ENCODE measurements at regions of chr5 and their contacts with region 1.

Region 1: GRCh38 chr5:150363185-150363584 is 5.7 kb downstream of the TCOF1 start:
- DNase-seq: no peak
- ATAC-seq: no peak
- H3K4me3 Mint-ChIP-seq: no peak overlapping the region
- H3K27ac Mint-ChIP-seq: no peak overlapping the region
- H3K4me1 Mint-ChIP-seq: peaks cover 40% of the 10 kb centered on the region
- H3K27me3 Mint-ChIP-seq: no peaks in the 10 kb centered on the region

Region 2: GRCh38 chr5:150377964-150378694 is 14.9 kb after region 1 on chr5:
- CTCF ChIA-PET with region 1: interaction called, 3 read pairs
- POLR2A ChIA-PET with region 1: interaction called, 12 read pairs
- intact Hi-C with region 1: no loop called
- DNase-seq: no peak
- ATAC-seq: no peak
- H3K4me3 Mint-ChIP-seq: no peak overlapping the region
- H3K27ac Mint-ChIP-seq: peak overlapping the region; percentile 37
- H3K4me1 Mint-ChIP-seq: no peaks in the 10 kb centered on the region
- H3K27me3 Mint-ChIP-seq: no peaks in the 10 kb centered on the region

Region 3: DNA sequence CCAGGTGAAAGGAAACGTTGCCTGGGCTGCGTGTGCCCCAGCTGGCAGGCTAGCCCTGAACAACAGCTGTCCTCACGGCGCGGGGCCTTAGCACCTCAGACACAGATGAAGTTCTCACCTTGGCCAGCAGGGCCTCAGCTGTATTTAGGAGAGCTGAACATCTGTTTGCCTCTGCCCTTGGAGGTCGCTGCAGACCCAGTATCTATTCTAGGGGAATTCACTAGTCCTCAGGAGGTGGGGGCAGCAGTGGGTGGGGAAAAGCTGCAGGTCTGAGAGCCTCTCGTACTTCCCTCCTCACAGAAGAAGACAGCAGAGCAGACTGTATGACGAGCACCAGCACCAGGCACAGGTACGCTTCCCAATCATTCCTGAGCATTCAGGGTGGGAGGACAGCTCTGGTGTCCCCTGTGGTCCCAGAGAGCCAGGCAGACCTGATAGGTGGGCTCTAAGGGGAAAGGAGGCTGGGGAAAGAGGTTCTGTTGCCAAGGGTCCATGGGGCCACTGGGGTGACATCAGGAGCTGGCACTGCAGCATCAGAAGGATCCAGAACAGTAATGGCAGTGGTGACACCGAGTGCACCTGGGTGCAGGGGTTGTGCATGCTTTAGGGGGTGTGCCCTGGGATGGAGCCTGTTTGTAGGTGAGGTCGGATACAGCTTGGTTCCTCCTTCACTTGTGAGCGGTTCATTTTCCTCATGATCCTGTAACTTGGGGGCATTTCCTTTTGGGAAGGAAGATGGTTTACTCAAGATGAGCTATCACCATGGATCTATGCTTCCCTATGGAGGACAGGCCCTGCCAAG is 35.7 kb after region 1 on chr5:
- CTCF ChIA-PET with region 1: interaction called, 10 read pairs
- POLR2A ChIA-PET with region 1: no interaction called
- intact Hi-C with region 1: no loop called
- DNase-seq: peak; percentile 38
- ATAC-seq: peak; percentile 56
- H3K4me3 Mint-ChIP-seq: no peak overlapping the region
- H3K27ac Mint-ChIP-seq: no peak overlapping the region
- H3K4me1 Mint-ChIP-seq: no peaks in the 10 kb centered on the region
- H3K27me3 Mint-ChIP-seq: no peaks in the 10 kb centered on the region